ENCODE measurements at regions of chr15 and their contacts with region 1.

Region 1: GRCh38 chr15:80152180-80152845 is 486 bp upstream of the FAH start:
- DNase-seq: peak; percentile 98
- CTCF ChIP-seq: no peak

Region 2: DNA sequence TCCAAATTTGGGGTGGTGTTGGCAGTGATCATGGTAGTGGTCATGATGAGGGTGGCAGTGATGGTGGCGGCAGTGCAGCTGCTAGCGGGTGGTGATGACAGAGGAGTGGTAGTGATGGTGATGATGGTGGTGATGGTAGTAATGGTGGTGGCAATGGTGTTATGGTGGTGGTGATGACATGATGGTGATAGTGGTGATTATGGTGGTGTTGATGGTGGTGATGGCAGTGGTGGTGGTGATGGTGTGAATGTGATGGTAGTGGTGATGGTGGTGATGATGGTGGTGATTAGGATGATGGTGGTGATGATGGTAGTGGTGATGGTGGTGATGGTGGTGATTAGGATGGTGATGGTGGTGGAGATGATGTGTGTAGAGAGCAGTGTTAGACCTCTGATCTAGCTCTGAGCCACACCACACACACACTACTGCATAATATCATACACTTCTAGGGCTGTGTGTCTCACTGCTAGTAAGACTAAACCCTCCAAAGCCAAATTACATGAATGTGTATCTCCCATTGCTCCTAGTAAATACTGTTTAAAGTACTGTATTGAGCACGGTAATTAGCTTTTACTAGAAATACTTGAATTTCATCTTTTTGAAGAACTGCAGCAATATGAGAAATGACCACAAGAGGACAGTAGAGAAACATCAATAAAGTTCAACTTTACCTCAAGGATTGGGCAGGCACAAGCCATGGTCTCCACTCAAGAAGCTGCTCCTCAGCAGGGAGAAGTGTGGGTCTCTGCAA is 812.6 kb before region 1 on chr15:
- in situ Hi-C with region 1: loop called (anchors 25 kb)
- DNase-seq: peak; percentile 23
- CTCF ChIP-seq: peak; percentile 82